ENCODE measurements at regions of chr7 and their contacts with region 1.

Region 1: GRCh38 chr7:155598810-155599210 is 45.7 kb upstream of the RBM33 start:
- DNase-seq: peak; percentile 78 to 94
- ATAC-seq: peak; percentile 84
- H3K4me3 ChIP-seq: no peak overlapping the region
- H3K27ac ChIP-seq: no peak overlapping the region
- H3K4me1 ChIP-seq: no peaks in the 10 kb centered on the region
- H3K27me3 ChIP-seq: no peaks in the 10 kb centered on the region

Region 2: DNA sequence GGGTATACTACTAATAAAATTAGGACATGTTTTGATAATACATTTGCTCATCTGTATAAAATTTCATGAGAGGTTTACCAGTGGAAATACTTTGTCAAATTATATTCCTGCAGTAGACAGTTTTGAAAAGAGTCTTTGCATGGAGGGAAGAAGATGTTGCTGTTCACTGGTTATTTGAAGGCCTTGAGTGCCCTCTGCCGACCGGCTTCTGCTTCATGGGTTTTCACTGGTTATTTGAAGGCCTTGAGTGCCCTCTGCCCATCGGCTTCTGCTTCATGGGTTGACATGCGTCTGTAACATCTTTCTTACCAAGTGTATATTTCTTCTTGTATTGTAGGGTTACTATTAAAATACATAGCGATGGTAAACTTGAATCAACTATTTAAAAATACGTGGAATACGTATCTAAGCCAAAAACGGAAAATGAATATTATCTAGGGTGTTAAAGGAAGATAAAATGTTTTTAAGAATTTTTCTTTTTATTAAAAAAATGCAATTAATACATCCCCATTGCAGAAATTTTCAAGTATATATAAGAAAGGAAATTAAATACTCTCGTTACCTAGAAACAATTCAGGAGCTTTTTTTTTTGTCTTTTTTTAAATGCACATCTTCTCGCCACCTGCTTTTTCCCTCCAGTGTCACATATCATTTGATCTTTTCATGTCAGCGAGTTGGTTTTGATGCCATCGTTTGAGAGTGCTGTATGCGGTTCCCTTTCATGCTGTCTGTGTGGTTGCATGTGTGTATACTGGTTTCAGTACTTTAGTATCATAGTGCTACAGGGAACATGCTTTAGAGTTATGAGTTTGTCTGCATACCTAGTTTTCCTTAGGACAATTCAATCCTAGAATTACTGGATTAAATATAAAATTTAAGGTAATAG is 140.1 kb after region 1 on chr7:
- intact Hi-C with region 1: loop called (anchors 1 to 5 kb)
- DNase-seq: peak; percentile 80 to 88
- ATAC-seq: peak; percentile 65
- H3K4me3 ChIP-seq: no peak overlapping the region
- H3K27ac ChIP-seq: no peak overlapping the region
- H3K4me1 ChIP-seq: no peaks in the 10 kb centered on the region
- H3K27me3 ChIP-seq: no peaks in the 10 kb centered on the region

Region 3: GRCh38 chr7:155763691-155764437 is 165.1 kb after region 1 on chr7:
- intact Hi-C with region 1: loop called (anchors 1 to 2 kb)
- DNase-seq: peak in 1 of 2 donors; percentile 55
- ATAC-seq: no peak
- H3K4me3 ChIP-seq: no peak overlapping the region
- H3K27ac ChIP-seq: no peak overlapping the region
- H3K4me1 ChIP-seq: no peaks in the 10 kb centered on the region
- H3K27me3 ChIP-seq: no peaks in the 10 kb centered on the region

Region 4: DNA sequence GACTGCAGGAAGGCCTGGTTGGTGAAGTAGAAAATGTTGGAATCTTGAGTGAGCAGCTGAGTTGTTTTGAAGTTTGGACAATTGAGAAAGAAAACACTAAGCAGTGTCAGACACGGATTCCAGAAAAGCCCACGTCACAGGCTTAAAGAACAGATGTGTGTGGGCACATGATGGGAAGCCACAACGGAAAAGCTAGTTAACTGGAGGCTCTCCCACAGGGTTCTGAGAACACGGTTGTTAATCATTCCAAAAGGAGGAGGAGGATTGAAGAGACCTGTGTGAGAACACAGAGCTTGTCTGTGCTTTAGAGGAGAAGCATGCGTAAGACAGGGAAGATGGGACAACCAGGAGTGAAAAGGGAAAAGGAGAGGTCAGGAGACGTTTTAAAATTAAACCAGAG is 170.9 kb after region 1 on chr7:
- intact Hi-C with region 1: loop called (anchors 1 to 2 kb)
- DNase-seq: no peak
- ATAC-seq: no peak
- H3K4me3 ChIP-seq: no peak overlapping the region
- H3K27ac ChIP-seq: no peak overlapping the region
- H3K4me1 ChIP-seq: no peaks in the 10 kb centered on the region
- H3K27me3 ChIP-seq: no peaks in the 10 kb centered on the region